Natural killer cell (primary cell): ENCODE measurements at regions of chr7 and their contacts with region 1.

Region 1: GRCh38 chr7:93245525-93246432 is 13.6 kb downstream of the VPS50 start:
- DNase-seq: peak in 1 of 2 donors; percentile 55
- ATAC-seq: peak; percentile 47 to 52 (median 48)
- H3K4me3 ChIP-seq: no peak overlapping the region
- H3K4me3 Mint-ChIP-seq: no peak overlapping the region
- H3K27ac ChIP-seq: no peak overlapping the region
- H3K27ac Mint-ChIP-seq: no peak overlapping the region
- H3K4me1 ChIP-seq: no peaks in the 10 kb centered on the region
- H3K4me1 Mint-ChIP-seq: peaks cover 0 to 5% of the 10 kb centered on the region in 2 donors
- H3K27me3 ChIP-seq: no peaks in the 10 kb centered on the region
- H3K27me3 Mint-ChIP-seq: no peaks in the 10 kb centered on the region
- CTCF ChIP-seq: peak; percentile 76

Region 2: GRCh38 chr7:94087664-94088352 is 842.0 kb after region 1 on chr7:
- intact Hi-C with region 1: loop called (anchors 5 kb)
- DNase-seq: peak in 1 of 2 donors; percentile 76
- ATAC-seq: peak; percentile 64 to 96 (median 82)
- H3K4me3 ChIP-seq: no peak overlapping the region
- H3K4me3 Mint-ChIP-seq: peak overlapping the region; percentile 53
- H3K27ac ChIP-seq: no peak overlapping the region
- H3K27ac Mint-ChIP-seq: no peak overlapping the region
- H3K4me1 ChIP-seq: no peaks in the 10 kb centered on the region
- H3K4me1 Mint-ChIP-seq: peaks cover 6 to 10% of the 10 kb centered on the region in 2 donors
- H3K27me3 ChIP-seq: no peaks in the 10 kb centered on the region
- H3K27me3 Mint-ChIP-seq: peaks cover 43 to 69% of the 10 kb centered on the region in 2 donors
- CTCF ChIP-seq: peak; percentile 72

Region 3: GRCh38 chr7:94395141-94396036 is 1149.6 kb after region 1 on chr7:
- intact Hi-C with region 1: loop called (anchors 5 kb)
- DNase-seq: peak in 1 of 2 donors; percentile 42
- ATAC-seq: peak; percentile 47 to 69 (median 55)
- H3K4me3 ChIP-seq: no peak overlapping the region
- H3K4me3 Mint-ChIP-seq: no peak overlapping the region
- H3K27ac ChIP-seq: no peak overlapping the region
- H3K27ac Mint-ChIP-seq: no peak overlapping the region
- H3K4me1 ChIP-seq: peaks cover 8% of the 10 kb centered on the region
- H3K4me1 Mint-ChIP-seq: peaks cover 8 to 9% of the 10 kb centered on the region in 2 donors
- H3K27me3 ChIP-seq: peaks cover 17% of the 10 kb centered on the region
- H3K27me3 Mint-ChIP-seq: peaks cover 16 to 17% of the 10 kb centered on the region in 2 donors
- CTCF ChIP-seq: peak; percentile 39